Upper lobe of right lung (tissue), 1 donor: ENCODE measurements at regions of chr17 and their contacts with region 1.

Region 1: GRCh38 chr17:66165513-66166123 is 26.3 kb downstream of the CEP112 start:
- DNase-seq: no peak
- ATAC-seq: peak; percentile 69
- H3K4me3 ChIP-seq: no peak overlapping the region
- H3K27ac ChIP-seq: no peak overlapping the region
- H3K4me1 ChIP-seq: no peaks in the 10 kb centered on the region
- H3K27me3 ChIP-seq: no peaks in the 10 kb centered on the region
- CTCF ChIP-seq: peak; percentile 75

Region 2: GRCh38 chr17:65231662-65232335 is 933.8 kb before region 1 on chr17:
- intact Hi-C with region 1: loop called (anchors 10 kb)
- DNase-seq: peak; percentile 68
- ATAC-seq: peak; percentile 86
- H3K4me3 ChIP-seq: no peak overlapping the region
- H3K27ac ChIP-seq: no peak overlapping the region
- H3K4me1 ChIP-seq: peaks cover 23% of the 10 kb centered on the region
- H3K27me3 ChIP-seq: no peaks in the 10 kb centered on the region
- CTCF ChIP-seq: peak; percentile 65